CD4-positive, alpha-beta T cell (primary cell): ENCODE measurements at regions of chr4 and their contacts with region 1.

Region 1: DNA sequence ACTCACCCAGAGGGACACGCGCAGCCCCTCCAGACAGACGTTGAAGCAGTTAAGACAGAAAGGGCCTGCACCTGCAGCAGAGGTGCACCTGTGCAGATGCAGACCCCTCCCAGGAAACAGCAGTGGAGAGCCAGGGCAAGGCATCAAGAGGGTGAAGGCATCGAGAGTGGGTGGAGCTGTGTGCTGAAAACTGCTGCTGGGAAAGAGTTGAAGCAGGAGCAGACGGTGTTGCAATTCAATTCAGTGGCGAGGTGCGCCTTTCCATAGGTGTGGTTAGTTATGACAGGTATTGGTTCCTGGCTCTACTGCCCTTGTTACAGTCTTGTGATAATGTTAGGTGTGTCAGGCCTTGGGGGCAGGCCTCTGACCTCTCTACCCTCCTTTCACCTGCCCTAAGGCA is 16.7 kb downstream of the LETM1 start:
- DNase-seq: no peak
- ATAC-seq: no peak
- H3K4me3 ChIP-seq: no peak overlapping the region
- H3K4me3 Mint-ChIP-seq: no peak overlapping the region
- H3K27ac ChIP-seq: no peak overlapping the region
- H3K27ac Mint-ChIP-seq: no peak overlapping the region
- H3K4me1 ChIP-seq: peaks cover 3% of the 10 kb centered on the region
- H3K4me1 Mint-ChIP-seq: no peaks in the 10 kb centered on the region
- H3K27me3 ChIP-seq: no peaks in the 10 kb centered on the region
- H3K27me3 Mint-ChIP-seq: no peaks in the 10 kb centered on the region
- CTCF ChIP-seq: no peak

Region 2: GRCh38 chr4:1887052-1887451 is 47.8 kb after region 1 on chr4:
- CTCF ChIA-PET with region 1: no interaction called
- POLR2A ChIA-PET with region 1: no interaction called
- intact Hi-C with region 1: loop called in 1 of 2 experiments (anchors 5 kb)
- DNase-seq: no peak
- ATAC-seq: no peak
- H3K4me3 ChIP-seq: no peak overlapping the region
- H3K4me3 Mint-ChIP-seq: no peak overlapping the region
- H3K27ac ChIP-seq: no peak overlapping the region
- H3K27ac Mint-ChIP-seq: no peak overlapping the region
- H3K4me1 ChIP-seq: peaks cover 2% of the 10 kb centered on the region
- H3K4me1 Mint-ChIP-seq: peaks cover 20% of the 10 kb centered on the region
- H3K27me3 ChIP-seq: no peaks in the 10 kb centered on the region
- H3K27me3 Mint-ChIP-seq: no peaks in the 10 kb centered on the region
- CTCF ChIP-seq: no peak

Region 3: DNA sequence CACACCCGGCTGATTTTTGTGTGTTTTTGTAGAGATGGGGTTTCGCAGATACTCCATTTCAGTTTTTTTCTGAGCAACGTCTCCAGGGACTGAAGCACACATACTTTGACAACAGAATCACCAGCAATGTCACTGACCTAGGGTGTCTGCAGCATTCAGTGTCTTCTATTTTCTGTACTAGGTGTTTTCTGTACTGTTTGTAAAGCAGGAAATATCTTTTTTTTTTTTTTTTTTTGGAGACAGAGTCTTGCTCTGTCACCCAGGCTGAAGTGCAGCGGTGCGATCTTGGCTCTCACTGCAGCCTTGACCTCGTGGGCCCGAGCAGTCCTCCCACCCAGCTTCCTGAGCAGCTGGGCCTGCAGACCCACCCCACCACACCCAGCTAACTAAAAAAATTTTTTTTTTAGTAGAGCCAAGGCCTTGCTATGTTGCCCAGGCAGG is 1013.2 kb after region 1 on chr4:
- CTCF ChIA-PET with region 1: no interaction called
- POLR2A ChIA-PET with region 1: no interaction called
- intact Hi-C with region 1: no loop called
- DNase-seq: peak in 3 of 14 experiments; percentile 34 to 46 (median 40)
- ATAC-seq: peak; percentile 67
- H3K4me3 ChIP-seq: no peak overlapping the region
- H3K4me3 Mint-ChIP-seq: peak overlapping the region; percentile 26
- H3K27ac ChIP-seq: peak overlapping the region; percentile 9 to 58
- H3K27ac Mint-ChIP-seq: peak overlapping the region; percentile 82
- H3K4me1 ChIP-seq: peaks cover 53% of the 10 kb centered on the region
- H3K4me1 Mint-ChIP-seq: peaks cover 79% of the 10 kb centered on the region
- H3K27me3 ChIP-seq: no peaks in the 10 kb centered on the region
- H3K27me3 Mint-ChIP-seq: no peaks in the 10 kb centered on the region
- CTCF ChIP-seq: no peak